Calu3 (cell line): ENCODE measurements at regions of chr7 and their contacts with region 1.

Region 1: DNA sequence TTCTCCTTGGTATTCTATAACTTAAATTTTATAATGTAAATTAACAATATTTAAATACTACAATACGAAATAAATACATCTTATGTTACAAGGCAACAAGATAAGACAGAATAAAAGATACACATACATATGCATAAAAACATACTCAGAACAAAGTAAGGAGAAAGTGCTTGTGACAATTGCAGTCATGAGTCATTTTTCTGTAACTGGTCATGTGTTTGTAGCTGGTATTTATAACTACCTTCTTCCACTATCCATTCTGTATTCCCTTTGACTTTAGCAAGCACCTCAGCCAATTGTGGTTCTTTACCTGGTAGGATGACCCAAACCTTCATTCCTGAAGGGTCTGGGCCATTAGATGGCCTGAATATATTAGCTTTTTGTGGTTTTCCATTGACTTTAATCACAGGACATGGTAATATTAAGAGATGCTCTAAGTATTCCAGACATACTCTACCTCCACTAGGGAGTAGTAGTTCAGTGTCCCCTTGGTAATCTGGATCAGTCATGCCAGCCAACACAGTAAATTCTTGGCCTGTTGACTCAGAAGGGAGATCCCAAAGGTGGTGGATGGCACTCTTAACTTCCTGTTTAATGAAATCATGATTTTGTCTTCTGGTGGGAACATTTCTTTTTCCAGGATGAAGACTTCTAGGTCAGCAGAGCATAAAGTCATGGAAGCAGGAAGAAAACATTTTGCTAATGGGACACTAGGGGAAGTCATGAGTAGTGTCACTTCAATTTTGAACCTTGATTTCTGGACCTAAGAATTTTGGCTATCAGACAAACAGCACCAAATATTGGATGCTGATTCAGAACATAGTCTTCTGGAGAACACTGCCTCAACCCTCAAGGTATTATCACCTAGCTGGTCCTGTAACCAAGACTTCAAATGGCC is 733.7 kb upstream of the IGFBP3 start:
- DNase-seq: no peak
- H3K4me3 Mint-ChIP-seq: no peak overlapping the region
- H3K27ac Mint-ChIP-seq: peak overlapping the region; percentile 69
- H3K4me1 Mint-ChIP-seq: peaks cover 31% of the 10 kb centered on the region
- H3K27me3 Mint-ChIP-seq: no peaks in the 10 kb centered on the region
- CTCF ChIP-seq: peak; percentile 48

Region 2: GRCh38 chr7:46206474-46207060 is 448.2 kb before region 1 on chr7:
- CTCF ChIA-PET with region 1: no interaction called
- intact Hi-C with region 1: loop called (anchors 5 kb)
- DNase-seq: peak; percentile 80
- H3K4me3 Mint-ChIP-seq: peak overlapping the region; percentile 19
- H3K27ac Mint-ChIP-seq: peak overlapping the region; percentile 97
- H3K4me1 Mint-ChIP-seq: peaks cover 70% of the 10 kb centered on the region
- H3K27me3 Mint-ChIP-seq: no peaks in the 10 kb centered on the region
- CTCF ChIP-seq: no peak

Region 3: GRCh38 chr7:46424934-46425333 is 229.9 kb before region 1 on chr7:
- CTCF ChIA-PET with region 1: no interaction called
- intact Hi-C with region 1: loop called (anchors 5 kb)
- DNase-seq: no peak
- H3K4me3 Mint-ChIP-seq: no peak overlapping the region
- H3K27ac Mint-ChIP-seq: no peak overlapping the region
- H3K4me1 Mint-ChIP-seq: no peaks in the 10 kb centered on the region
- H3K27me3 Mint-ChIP-seq: no peaks in the 10 kb centered on the region
- CTCF ChIP-seq: no peak

Region 4: DNA sequence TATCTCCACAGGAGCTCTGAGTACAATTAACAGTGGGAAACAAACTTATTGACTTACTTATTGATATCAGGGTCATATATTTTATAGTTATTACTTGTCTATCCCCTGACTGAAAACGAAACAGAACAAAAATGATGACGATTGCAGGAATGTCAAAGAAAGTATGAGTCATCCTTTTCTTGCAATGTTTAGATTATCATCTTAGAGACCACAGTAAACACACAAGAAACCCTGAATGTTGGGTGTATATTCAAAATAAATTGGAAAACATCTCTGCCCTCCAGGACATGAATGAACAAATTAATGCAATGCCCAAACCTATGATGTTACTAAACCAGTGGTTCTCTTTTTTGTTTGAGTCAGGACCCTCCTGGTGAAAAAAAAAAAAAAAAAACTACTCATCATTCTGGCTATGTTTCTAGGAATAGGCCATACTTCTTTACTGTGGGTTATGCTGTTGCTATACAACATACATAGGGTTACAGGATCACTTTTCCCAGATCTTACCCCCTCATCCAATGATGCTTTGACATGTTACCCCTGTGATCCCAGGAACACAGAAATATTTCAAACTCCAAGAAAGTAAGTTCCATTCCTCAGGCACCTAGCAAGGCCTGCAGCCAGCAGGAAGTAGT is 110.3 kb before region 1 on chr7:
- CTCF ChIA-PET with region 1: interaction called, 10 read pairs
- intact Hi-C with region 1: loop called (anchors 1 kb)
- DNase-seq: no peak
- H3K4me3 Mint-ChIP-seq: no peak overlapping the region
- H3K27ac Mint-ChIP-seq: peak overlapping the region; percentile 70
- H3K4me1 Mint-ChIP-seq: peaks cover 53% of the 10 kb centered on the region
- H3K27me3 Mint-ChIP-seq: no peaks in the 10 kb centered on the region
- CTCF ChIP-seq: no peak

Region 5: GRCh38 chr7:46695051-46695707 is 40.4 kb after region 1 on chr7:
- CTCF ChIA-PET with region 1: interaction called, 3 read pairs
- intact Hi-C with region 1: loop called (anchors 1 kb)
- DNase-seq: peak; percentile 86
- H3K4me3 Mint-ChIP-seq: no peak overlapping the region
- H3K27ac Mint-ChIP-seq: peak overlapping the region; percentile 91
- H3K4me1 Mint-ChIP-seq: peaks cover 47% of the 10 kb centered on the region
- H3K27me3 Mint-ChIP-seq: no peaks in the 10 kb centered on the region
- CTCF ChIP-seq: peak; percentile 16

Region 6: GRCh38 chr7:46932676-46933424 is 278.1 kb after region 1 on chr7:
- CTCF ChIA-PET with region 1: no interaction called
- intact Hi-C with region 1: loop called (anchors 1 kb)
- DNase-seq: peak; percentile 41
- H3K4me3 Mint-ChIP-seq: peak overlapping the region; percentile 18
- H3K27ac Mint-ChIP-seq: peak overlapping the region; percentile 99
- H3K4me1 Mint-ChIP-seq: peaks cover 59% of the 10 kb centered on the region
- H3K27me3 Mint-ChIP-seq: no peaks in the 10 kb centered on the region
- CTCF ChIP-seq: no peak